Tibial artery (tissue), 4 donors: ENCODE measurements at regions of chr12 and their contacts with region 1.

Region 1: DNA sequence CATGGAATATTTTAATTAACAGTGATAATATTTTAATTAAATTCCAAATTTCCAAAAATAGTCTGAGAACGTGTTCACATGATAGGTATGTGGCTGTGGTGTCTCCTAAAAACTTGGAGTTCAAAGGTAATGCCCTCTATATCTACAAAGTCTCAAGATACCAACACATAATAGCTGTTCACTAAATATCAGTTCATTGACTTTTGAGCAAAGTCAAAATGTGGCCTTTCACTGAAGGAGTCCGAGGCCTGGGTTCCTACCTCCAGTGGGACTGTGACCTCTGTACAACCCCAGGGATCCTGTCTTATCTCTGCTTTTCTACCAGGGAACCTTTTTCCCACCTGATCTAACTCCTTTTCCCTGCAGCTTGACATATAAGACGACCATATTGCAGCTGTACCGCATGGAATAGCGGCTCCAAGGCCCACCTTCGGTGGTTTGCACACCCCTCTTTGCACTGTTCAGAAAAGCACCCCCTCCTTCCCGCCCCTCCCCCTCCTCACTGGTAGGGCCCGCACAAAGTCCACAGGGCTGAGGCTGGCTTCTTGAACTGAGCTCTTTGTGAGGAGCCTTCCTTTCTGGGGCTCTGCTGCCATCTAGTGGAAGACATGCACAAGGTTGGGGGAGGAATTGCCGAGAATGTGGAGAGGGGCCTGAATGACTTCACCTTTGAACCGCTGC is 3.1 kb downstream of the CCND2 start:
- DNase-seq: peak; percentile 86 to 89
- H3K4me3 ChIP-seq: peak overlapping the region; percentile 68 to 86
- H3K27ac ChIP-seq: peak overlapping the region; percentile 91 to 93
- H3K4me1 ChIP-seq: peaks cover 0 to 77% (median 58%) of the 10 kb centered on the region in 4 donors
- H3K27me3 ChIP-seq: peaks cover 0 to 6% of the 10 kb centered on the region in 2 donors
- CTCF ChIP-seq: peak; percentile 91 to 92

Region 2: DNA sequence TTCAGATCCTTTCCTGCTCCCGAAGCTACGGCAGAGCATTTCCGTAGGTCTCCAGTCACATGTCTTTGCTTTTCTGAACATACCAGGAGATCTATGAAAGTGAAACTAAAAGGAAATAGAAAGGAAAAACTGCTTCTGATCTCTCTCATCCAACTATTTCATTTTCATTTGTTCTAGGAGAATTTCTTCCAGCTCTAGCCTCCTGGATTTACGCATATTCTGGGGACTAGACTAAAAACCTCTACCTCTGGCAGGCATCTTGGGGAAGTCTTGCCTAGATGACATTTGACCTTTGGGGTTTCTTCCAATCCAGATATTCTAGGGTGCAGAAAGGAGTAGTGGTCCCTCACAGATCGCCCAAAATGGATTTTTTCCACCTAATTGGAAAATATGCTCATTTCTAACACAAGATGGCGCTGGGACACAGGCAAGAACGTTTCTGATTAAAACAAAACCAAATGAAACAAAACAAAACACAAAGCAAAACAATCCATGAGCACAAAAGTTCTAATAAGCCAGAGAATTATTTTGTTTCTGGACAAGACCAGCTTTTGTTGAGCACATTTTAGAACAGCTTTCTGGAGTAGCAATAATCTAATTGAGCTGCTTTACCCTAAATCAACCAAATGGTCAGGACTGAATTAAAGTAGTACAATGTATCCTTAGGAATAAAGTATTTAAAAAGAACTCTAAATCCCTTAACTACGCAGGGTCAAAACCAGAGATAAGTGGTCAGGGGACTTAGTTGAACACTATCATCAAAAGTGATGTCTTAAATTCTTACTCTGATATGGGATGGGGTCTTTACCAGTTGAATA is 391.2 kb before region 1 on chr12:
- intact Hi-C with region 1: loop called (anchors 5 kb)
- DNase-seq: peak in 1 of 2 donors; percentile 24
- H3K4me3 ChIP-seq: peak overlapping the region; percentile 35 to 51
- H3K27ac ChIP-seq: peak overlapping the region; percentile 65 to 68
- H3K4me1 ChIP-seq: no peaks in the 10 kb centered on the region
- H3K27me3 ChIP-seq: peaks cover 0 to 10% of the 10 kb centered on the region in 2 donors
- CTCF ChIP-seq: peak; percentile 78 to 90

Region 3: DNA sequence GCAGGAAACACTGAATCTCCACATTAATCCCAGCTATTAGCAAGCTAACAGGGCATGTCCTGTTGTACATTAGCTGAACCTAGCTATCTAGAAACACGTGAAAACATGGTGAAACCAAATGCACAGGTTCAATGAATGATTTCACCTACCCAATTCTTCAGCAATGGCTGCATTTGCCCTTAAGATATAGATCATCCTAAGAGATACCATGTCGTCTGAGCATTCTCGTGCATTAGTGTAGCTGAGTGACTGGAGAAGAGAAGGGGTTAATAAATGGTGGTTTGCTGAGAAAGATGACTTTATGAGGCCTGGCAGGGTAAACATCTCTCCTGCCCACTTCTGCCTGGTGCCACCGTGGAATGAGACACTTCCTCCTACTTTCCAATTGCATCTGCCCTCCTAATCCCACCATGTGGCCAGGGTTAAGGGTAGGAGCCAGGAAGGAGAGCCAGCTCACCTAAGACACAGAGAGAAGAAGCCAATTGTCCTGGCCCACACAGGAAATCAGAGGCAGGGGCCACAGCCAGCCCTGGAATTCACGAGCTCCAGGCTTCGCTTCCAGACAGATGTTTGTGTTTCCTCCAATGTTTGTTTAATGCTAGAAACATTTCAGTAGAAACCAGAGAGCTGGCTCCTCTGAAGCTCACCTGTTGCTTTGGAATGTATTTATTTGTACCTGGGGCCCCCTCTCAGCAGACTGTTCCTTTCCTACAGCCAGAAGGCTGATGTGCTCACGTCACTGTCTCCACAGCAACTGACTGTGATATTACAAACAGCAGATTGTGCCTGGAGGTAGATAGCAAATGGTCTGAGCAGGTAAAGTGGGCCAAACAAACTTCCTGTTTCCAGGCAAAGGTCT is 277.5 kb before region 1 on chr12:
- intact Hi-C with region 1: loop called (anchors 5 kb)
- DNase-seq: no peak
- H3K4me3 ChIP-seq: no peak overlapping the region
- H3K27ac ChIP-seq: no peak overlapping the region
- H3K4me1 ChIP-seq: peaks cover 0 to 3% (median 0%) of the 10 kb centered on the region in 4 donors
- H3K27me3 ChIP-seq: peaks cover 0 to 13% of the 10 kb centered on the region in 2 donors
- CTCF ChIP-seq: no peak

Region 4: GRCh38 chr12:4030929-4031702 is 245.5 kb before region 1 on chr12:
- intact Hi-C with region 1: loop called (anchors 2 kb)
- DNase-seq: peak; percentile 91 to 97
- H3K4me3 ChIP-seq: peak overlapping the region; percentile 57 to 77
- H3K27ac ChIP-seq: peak overlapping the region; percentile 89 to 94
- H3K4me1 ChIP-seq: peaks cover 0 to 12% (median 11%) of the 10 kb centered on the region in 4 donors
- H3K27me3 ChIP-seq: no peaks in the 10 kb centered on the region
- CTCF ChIP-seq: peak; percentile 3 to 11

Region 5: GRCh38 chr12:4107436-4107878 is 169.2 kb before region 1 on chr12:
- intact Hi-C with region 1: loop called (anchors 5 kb)
- DNase-seq: peak in 1 of 2 donors; percentile 48
- H3K4me3 ChIP-seq: no peak overlapping the region
- H3K27ac ChIP-seq: no peak overlapping the region
- H3K4me1 ChIP-seq: no peaks in the 10 kb centered on the region
- H3K27me3 ChIP-seq: peaks cover 0 to 35% of the 10 kb centered on the region in 2 donors
- CTCF ChIP-seq: peak; percentile 22 to 46

Region 6: GRCh38 chr12:4203772-4204376 is 72.8 kb before region 1 on chr12:
- intact Hi-C with region 1: no loop called
- DNase-seq: no peak
- H3K4me3 ChIP-seq: no peak overlapping the region
- H3K27ac ChIP-seq: no peak overlapping the region
- H3K4me1 ChIP-seq: no peaks in the 10 kb centered on the region
- H3K27me3 ChIP-seq: peaks cover 0 to 29% of the 10 kb centered on the region in 2 donors
- CTCF ChIP-seq: no peak

Region 7: DNA sequence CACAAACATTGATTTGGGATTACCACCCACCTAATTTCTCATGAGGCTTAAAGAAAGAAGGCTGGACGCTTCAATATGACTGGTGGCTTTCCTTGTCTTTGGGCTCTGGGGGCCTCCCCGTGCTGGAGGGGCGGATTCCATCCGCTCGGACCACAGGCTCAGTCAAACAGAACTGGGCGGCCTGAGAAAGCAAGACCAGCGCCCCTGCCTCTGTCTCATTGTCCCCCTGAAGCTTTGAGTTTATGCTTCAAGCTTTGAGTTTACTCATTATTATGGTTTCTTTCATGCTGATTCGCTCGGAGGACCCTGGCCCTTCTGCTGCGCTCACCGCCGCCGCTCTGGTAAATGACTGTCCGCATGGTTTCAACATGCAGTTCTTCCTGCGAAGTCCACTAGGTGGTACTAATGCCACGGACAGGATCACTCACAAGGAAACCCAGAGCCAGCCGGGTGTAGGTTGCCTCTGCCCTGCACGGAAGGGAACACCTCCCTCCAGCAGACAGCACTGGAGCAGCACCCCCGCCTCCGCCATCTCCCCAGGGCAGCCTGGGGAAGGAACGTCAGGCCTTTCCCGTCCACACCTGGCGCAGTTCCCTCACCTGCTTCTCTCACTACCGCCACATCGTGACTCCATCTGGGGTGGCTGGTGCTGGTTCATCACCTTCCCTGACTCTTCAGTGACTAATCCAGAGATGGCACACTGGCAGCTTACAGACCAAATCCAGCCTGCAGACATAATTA is 31.1 kb after region 1 on chr12:
- intact Hi-C with region 1: no loop called
- DNase-seq: peak; percentile 42 to 79
- H3K4me3 ChIP-seq: no peak overlapping the region
- H3K27ac ChIP-seq: no peak overlapping the region
- H3K4me1 ChIP-seq: peaks cover 0 to 8% (median 4%) of the 10 kb centered on the region in 4 donors
- H3K27me3 ChIP-seq: no peaks in the 10 kb centered on the region
- CTCF ChIP-seq: peak; percentile 57 to 63

Region 8: GRCh38 chr12:4320853-4321701 is 44.4 kb after region 1 on chr12 and contains the start of gene TIGAR:
- intact Hi-C with region 1: loop called (anchors 5 kb)
- DNase-seq: peak; percentile 91 to 95
- H3K4me3 ChIP-seq: peak within 1 kb of the TSS; percentile 82 to 83
- H3K27ac ChIP-seq: peak within 1 kb of the TSS; percentile 71 to 86
- H3K4me1 ChIP-seq: peaks cover 0 to 25% (median 11%) of the 10 kb centered on the region in 4 donors
- H3K27me3 ChIP-seq: no peaks in the 10 kb centered on the region
- CTCF ChIP-seq: no peak